Tibial artery (tissue), 4 donors: ENCODE measurements at regions of chr13 and their contacts with region 1.

Region 1: DNA sequence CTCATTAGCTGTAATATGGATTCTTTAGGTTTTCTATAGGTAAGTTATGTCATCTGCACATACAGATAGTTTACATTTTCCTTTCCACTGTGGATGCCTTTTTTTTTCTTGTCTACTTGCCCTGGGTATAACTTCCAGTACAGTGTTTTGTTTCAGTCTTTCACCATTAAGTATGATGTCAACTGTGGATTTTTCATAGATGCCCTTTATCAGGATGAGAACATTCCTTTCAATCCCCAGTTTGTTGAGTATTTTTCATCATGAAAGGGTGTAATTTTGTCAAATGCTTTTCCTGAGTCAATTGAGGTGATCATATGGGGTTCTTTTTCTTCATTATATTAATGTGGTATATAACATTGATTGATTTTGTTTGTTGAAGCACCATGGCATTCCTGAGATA is 43.6 kb upstream of the SACS start:
- DNase-seq: no peak
- H3K4me3 ChIP-seq: no peak overlapping the region
- H3K27ac ChIP-seq: no peak overlapping the region
- H3K4me1 ChIP-seq: no peaks in the 10 kb centered on the region
- H3K27me3 ChIP-seq: no peaks in the 10 kb centered on the region
- CTCF ChIP-seq: no peak

Region 2: DNA sequence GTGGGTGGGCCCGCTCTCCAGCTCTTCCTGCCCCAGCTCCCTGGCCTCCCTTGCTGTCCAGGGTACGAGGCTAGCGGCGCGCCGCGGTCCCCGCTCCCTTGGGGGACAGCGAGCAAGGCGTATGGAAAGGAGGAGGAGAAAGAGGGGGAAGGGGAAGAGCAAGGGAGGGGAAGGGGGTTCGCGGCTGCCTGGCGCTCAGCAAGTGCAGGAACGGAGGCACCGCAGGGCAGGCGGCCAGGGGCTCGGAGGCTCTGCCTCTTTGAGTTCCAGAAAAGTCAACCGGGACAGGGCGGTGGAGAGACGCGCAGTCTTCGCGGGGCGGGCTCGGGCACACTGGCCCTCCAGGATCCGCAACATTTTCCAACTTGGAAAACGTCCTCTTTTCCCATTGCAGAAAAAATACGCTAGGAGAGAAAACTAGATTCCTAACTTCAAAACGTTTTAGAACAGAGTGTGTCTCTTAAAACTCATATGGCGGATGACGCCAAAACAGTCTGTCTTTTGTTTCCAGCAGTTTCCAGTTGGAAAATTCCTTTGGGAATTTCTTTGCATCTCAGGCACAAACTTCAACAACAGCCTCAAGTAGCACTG is 70.0 kb after region 1 on chr13:
- intact Hi-C with region 1: no loop called
- DNase-seq: peak in 1 of 2 donors; percentile 66
- H3K4me3 ChIP-seq: peak overlapping the region; percentile 42 to 55
- H3K27ac ChIP-seq: peak overlapping the region; percentile 9 to 40
- H3K4me1 ChIP-seq: peaks cover 0 to 9% (median 5%) of the 10 kb centered on the region in 4 donors
- H3K27me3 ChIP-seq: no peaks in the 10 kb centered on the region
- CTCF ChIP-seq: no peak

Region 3: GRCh38 chr13:23561261-23561660 is 84.2 kb after region 1 on chr13:
- intact Hi-C with region 1: loop called (anchors 5 kb)
- DNase-seq: no peak
- H3K4me3 ChIP-seq: no peak overlapping the region
- H3K27ac ChIP-seq: no peak overlapping the region
- H3K4me1 ChIP-seq: peaks cover 0 to 7% (median 6%) of the 10 kb centered on the region in 4 donors
- H3K27me3 ChIP-seq: no peaks in the 10 kb centered on the region
- CTCF ChIP-seq: no peak

Region 4: DNA sequence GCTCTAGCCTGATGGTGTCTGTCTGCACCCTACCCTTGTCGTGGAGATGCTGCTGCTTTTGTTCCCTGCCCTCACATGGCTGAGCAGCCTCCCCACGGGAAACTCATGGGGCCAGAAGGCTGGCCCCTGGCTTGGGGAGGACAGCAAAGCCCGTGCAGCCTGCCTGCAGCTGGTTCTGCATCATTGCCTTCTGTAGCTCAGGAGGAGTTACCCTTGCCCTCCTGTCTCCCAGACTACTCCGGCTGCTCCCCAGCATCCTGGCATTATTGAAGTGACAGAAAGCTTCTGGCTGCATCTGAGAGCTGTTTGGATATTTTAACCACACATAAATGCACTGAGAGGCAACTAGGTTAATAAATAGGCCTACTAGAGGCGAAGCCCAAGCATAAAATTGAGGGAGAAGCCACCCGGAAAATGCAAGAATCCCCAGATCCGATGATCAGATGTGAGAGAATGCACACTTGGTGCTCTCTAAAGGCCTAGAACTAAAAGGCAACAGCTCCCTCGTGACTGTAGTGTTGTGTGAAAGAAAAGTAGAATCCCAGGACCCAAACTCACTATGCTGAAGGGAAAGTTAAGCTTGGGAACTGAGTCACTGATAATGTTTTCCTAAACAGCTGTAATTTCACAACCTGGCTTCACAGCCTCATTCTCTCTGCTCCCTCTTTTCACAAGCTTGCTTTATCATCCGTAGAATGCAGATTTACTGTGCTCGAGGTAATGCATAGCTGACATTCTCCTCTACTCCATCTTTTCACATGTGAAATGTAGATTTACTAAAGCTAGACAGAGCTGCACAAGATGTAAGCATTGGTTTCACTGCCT is 204.0 kb after region 1 on chr13:
- intact Hi-C with region 1: no loop called
- DNase-seq: no peak
- H3K4me3 ChIP-seq: no peak overlapping the region
- H3K27ac ChIP-seq: no peak overlapping the region
- H3K4me1 ChIP-seq: no peaks in the 10 kb centered on the region
- H3K27me3 ChIP-seq: no peaks in the 10 kb centered on the region
- CTCF ChIP-seq: no peak